GM18951 (cell line): ENCODE measurements at regions of chr11 and their contacts with region 1.

Region 1: GRCh38 chr11:45110562-45110961 is 35.9 kb upstream of the PRDM11 start:
- POLR2A ChIP-seq: no peak

Region 2: DNA sequence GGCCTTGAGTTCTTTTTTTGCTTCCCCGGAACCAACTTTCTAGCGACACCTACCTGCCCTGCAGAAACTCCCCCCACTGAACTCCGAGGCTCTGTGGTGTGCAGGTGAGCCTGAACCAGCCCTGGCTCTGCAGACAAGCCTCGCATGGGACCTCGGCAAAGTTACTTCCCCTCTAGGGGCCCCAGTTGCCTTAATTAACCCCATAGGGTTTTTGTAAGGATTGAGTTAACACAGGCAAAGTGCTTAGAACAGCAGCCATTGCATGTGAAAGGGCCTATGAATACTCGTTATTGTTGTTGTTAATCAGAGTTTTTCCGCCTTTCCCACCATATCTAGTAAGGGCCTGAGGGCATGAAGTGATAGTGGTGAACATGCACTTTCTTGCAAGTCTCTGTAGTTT is 188.2 kb after region 1 on chr11:
- in situ Hi-C with region 1: loop called (anchors 10 kb)
- POLR2A ChIP-seq: no peak

Region 3: DNA sequence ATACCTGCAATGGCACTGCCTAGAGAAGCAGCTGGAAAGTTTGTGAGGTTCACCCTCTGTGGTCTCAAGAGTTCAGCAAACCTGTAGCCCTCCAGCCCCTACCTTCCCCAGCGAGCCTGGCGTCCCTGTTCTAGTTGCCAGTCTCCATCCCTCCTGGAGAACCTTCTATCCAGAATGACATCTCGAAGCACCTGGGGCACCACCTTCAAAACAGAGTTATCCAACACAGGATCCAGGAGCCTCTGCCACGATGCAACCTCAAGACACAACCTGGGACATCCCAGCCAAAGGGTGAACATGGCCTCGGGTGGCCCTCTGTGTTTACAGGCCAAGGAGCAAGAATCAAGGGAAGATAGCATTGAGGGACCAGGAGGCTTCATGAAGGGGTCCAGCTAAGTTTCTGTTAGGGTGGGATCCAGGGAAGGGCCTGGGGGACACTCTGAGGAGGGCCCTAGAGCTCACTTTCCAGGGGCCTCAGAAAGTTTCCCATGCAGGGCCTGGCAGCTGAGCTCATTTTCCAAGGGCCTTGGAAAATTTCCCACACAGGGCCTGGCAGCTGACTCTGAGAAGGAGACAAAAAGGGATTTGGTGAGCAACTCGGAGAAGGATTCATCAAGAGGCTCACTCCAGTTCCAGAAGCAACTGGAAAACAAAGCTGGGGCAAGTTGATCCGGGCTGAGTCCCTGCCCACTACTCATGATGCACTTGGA is 212.5 kb after region 1 on chr11:
- in situ Hi-C with region 1: loop called (anchors 10 kb)
- POLR2A ChIP-seq: no peak